ENCODE measurements at regions of chr7 and their contacts with region 1.

Region 1: DNA sequence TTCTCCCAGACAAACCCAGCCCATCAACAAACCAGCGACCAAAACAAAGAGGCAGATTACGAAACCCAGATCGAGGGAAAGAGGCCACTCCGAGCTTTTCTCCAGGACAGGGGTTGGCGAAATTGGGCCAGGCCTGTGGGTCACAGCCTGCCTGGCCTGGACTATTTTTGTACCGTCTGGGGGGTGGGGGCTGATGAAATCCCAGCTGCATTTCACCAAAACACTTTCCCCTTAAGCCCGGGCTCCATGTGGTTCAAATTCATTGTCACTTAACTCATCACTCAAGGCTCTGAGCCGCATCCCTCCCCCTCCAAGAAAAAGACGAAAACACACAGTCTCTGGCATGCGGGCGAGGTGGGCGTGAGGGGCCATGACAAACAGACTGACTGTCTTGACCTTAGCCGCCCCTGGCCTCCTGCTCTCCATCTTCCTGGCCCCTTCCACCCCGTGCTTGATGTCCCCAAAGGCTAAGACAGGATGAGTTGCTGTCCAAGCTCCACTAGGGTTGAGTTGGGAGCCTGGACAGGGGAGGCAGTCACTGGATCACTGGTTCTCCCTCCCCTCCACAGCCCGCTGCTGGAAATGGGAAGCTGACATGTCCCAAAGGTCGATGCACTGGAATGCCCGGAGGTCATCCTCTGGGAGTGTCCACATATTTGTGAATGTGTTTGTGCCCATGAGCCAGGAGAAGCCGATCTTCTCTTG is 19.2 kb downstream of the TMEM270 start:
- DNase-seq: no peak
- ATAC-seq: no peak
- H3K4me3 Mint-ChIP-seq: no peak overlapping the region
- H3K27ac Mint-ChIP-seq: no peak overlapping the region
- H3K4me1 Mint-ChIP-seq: no peaks in the 10 kb centered on the region
- H3K27me3 Mint-ChIP-seq: no peaks in the 10 kb centered on the region

Region 2: GRCh38 chr7:73746003-73746777 is 133.9 kb before region 1 on chr7:
- CTCF ChIA-PET with region 1: no interaction called
- POLR2A ChIA-PET with region 1: no interaction called
- intact Hi-C with region 1: no loop called
- DNase-seq: no peak
- ATAC-seq: no peak
- H3K4me3 Mint-ChIP-seq: no peak overlapping the region
- H3K27ac Mint-ChIP-seq: no peak overlapping the region
- H3K4me1 Mint-ChIP-seq: no peaks in the 10 kb centered on the region
- H3K27me3 Mint-ChIP-seq: peaks cover 3% of the 10 kb centered on the region

Region 3: DNA sequence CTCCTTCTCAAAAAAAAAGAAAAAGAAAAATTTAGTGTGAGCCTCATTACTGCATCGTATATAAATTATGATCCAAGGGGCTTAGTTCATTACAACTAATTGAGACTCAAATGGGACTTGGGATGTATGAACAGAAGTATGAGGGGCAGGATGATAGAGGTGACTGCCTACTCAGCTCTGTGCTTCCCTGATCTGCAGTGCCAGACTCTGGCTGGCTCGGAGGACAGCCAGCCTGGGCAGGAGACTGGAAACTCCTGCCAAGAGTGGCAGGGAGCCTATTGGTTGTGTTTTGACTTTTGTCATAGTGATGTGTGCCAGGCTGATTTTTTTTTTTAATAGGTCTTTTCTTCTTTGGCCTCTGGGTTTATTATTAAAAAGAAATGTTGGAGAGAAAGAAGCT is 499.8 kb after region 1 on chr7:
- CTCF ChIA-PET with region 1: no interaction called
- POLR2A ChIA-PET with region 1: no interaction called
- intact Hi-C with region 1: loop called in 1 of 2 experiments (anchors 10 kb)
- DNase-seq: no peak
- ATAC-seq: no peak
- H3K4me3 Mint-ChIP-seq: no peak overlapping the region
- H3K27ac Mint-ChIP-seq: no peak overlapping the region
- H3K4me1 Mint-ChIP-seq: no peaks in the 10 kb centered on the region
- H3K27me3 Mint-ChIP-seq: no peaks in the 10 kb centered on the region

Measured in activated CD4-positive, alpha-beta T cell treated with anti-CD3 and anti-CD28 coated beads for 36 hours (primary cell).